ENCODE measurements at regions of chr3 and their contacts with region 1.

Region 1: DNA sequence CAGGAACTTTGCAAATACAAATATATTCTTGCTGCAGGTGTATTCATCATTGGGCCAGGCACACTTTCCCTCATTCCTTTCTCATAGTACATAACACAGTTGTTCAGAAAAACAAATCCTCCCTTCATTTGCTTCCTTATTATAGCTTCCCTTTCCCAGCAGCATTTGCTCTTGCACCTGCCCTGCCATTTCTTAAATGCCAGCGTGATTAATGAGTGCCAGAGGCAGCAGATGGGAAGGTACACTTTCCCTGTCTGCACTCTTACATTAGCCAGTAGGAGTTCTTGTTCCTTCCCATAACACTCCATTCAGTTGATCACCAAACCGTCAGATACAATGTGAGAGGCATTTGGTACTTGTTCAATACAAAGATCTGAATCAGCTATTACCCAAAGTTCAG is 128.5 kb upstream of the GAP43 start:
- DNase-seq: no peak
- ATAC-seq: no peak
- H3K4me3 ChIP-seq: no peak overlapping the region
- H3K27ac ChIP-seq: no peak overlapping the region
- H3K4me1 ChIP-seq: no peaks in the 10 kb centered on the region
- H3K27me3 ChIP-seq: peaks cover 12% of the 10 kb centered on the region; the same call in 1 of the 2 replicates
- CTCF ChIP-seq: no peak

Region 2: GRCh38 chr3:115512565-115513415 is 18.0 kb after region 1 on chr3:
- CTCF ChIA-PET with region 1: no interaction called
- POLR2A ChIA-PET with region 1: no interaction called
- intact Hi-C with region 1: loop called (anchors 1 kb)
- DNase-seq: no peak
- ATAC-seq: peak; percentile 64
- H3K4me3 ChIP-seq: peak overlapping the region; percentile 41
- H3K27ac ChIP-seq: no peak overlapping the region
- H3K4me1 ChIP-seq: no peaks in the 10 kb centered on the region
- H3K27me3 ChIP-seq: no peaks in the 10 kb centered on the region
- CTCF ChIP-seq: no peak

Region 3: DNA sequence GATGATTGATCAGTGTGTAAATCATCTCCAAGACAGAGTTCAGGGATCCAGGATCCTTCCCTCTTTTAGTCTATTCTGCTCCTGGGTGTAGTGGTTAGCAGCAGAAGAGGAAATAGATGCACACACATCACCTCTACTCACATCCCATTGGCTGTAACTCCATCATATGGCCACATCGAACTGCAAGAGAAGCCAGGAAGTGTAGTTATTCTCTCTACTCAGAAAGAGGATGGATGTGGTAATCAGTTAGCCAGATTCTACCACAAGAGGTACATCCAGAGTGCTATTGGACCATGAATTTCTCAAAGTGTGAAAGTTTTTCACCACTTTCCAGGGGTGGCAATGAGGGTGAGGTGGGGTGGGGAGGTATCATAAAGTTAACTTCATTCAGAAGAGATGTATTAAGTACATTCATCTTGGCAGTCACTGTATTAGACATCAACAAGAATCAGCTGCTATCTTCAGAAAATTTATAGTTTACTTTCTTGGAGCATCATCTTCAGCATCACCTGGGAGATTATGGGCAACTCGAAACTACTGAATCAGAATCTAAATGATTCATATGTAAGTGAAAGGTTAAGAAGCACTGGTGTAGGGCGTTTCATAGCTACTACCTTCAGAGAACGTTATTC is 67.9 kb after region 1 on chr3:
- CTCF ChIA-PET with region 1: no interaction called
- POLR2A ChIA-PET with region 1: no interaction called
- intact Hi-C with region 1: loop called (anchors 2 kb)
- DNase-seq: no peak
- ATAC-seq: no peak
- H3K4me3 ChIP-seq: no peak overlapping the region
- H3K27ac ChIP-seq: no peak overlapping the region
- H3K4me1 ChIP-seq: no peaks in the 10 kb centered on the region
- H3K27me3 ChIP-seq: peaks cover 24% of the 10 kb centered on the region
- CTCF ChIP-seq: no peak

Region 4: GRCh38 chr3:115698851-115699591 is 204.2 kb after region 1 on chr3:
- CTCF ChIA-PET with region 1: no interaction called
- POLR2A ChIA-PET with region 1: no interaction called
- intact Hi-C with region 1: no loop called
- DNase-seq: no peak
- ATAC-seq: no peak
- H3K4me3 ChIP-seq: no peak overlapping the region
- H3K27ac ChIP-seq: no peak overlapping the region
- H3K4me1 ChIP-seq: no peaks in the 10 kb centered on the region
- H3K27me3 ChIP-seq: no peaks in the 10 kb centered on the region
- CTCF ChIP-seq: no peak

Measured in PC-3 (cell line).